CD8-positive, alpha-beta memory T cell (primary cell): ENCODE measurements at regions of chr2 and their contacts with region 1.

Region 1: GRCh38 chr2:210195101-210195852 is 24.1 kb upstream of the KANSL1L start:
- DNase-seq: peak in 2 of 5 donors; percentile 39 to 41
- H3K4me3 ChIP-seq: no peak overlapping the region
- H3K4me3 Mint-ChIP-seq: no peak overlapping the region
- H3K27ac ChIP-seq: no peak overlapping the region
- H3K27ac Mint-ChIP-seq: no peak overlapping the region
- H3K4me1 ChIP-seq: no peaks in the 10 kb centered on the region
- H3K4me1 Mint-ChIP-seq: no peaks in the 10 kb centered on the region
- H3K27me3 ChIP-seq: no peaks in the 10 kb centered on the region
- H3K27me3 Mint-ChIP-seq: peaks cover 5 to 10% of the 10 kb centered on the region in 2 donors

Region 2: GRCh38 chr2:209977386-209978239 is 217.7 kb before region 1 on chr2:
- CTCF ChIA-PET with region 1: interaction called, 20 read pairs
- POLR2A ChIA-PET with region 1: no interaction called
- DNase-seq: peak in 2 of 5 donors; percentile 31 to 50
- H3K4me3 ChIP-seq: no peak overlapping the region
- H3K4me3 Mint-ChIP-seq: no peak overlapping the region
- H3K27ac ChIP-seq: no peak overlapping the region
- H3K27ac Mint-ChIP-seq: no peak overlapping the region
- H3K4me1 ChIP-seq: no peaks in the 10 kb centered on the region
- H3K4me1 Mint-ChIP-seq: no peaks in the 10 kb centered on the region
- H3K27me3 ChIP-seq: no peaks in the 10 kb centered on the region
- H3K27me3 Mint-ChIP-seq: peaks cover 1 to 13% of the 10 kb centered on the region in 2 donors

Region 3: GRCh38 chr2:210112871-210113270 is 82.4 kb before region 1 on chr2:
- CTCF ChIA-PET with region 1: no interaction called
- POLR2A ChIA-PET with region 1: no interaction called
- DNase-seq: no peak
- H3K4me3 ChIP-seq: no peak overlapping the region
- H3K4me3 Mint-ChIP-seq: no peak overlapping the region
- H3K27ac ChIP-seq: no peak overlapping the region
- H3K27ac Mint-ChIP-seq: no peak overlapping the region
- H3K4me1 ChIP-seq: no peaks in the 10 kb centered on the region
- H3K4me1 Mint-ChIP-seq: peaks cover 0 to 2% (median 0%) of the 10 kb centered on the region in 3 donors
- H3K27me3 ChIP-seq: no peaks in the 10 kb centered on the region
- H3K27me3 Mint-ChIP-seq: no peaks in the 10 kb centered on the region

Region 4: GRCh38 chr2:210288408-210288807 is 93.1 kb after region 1 on chr2:
- CTCF ChIA-PET with region 1: no interaction called
- POLR2A ChIA-PET with region 1: no interaction called
- DNase-seq: no peak
- H3K4me3 ChIP-seq: no peak overlapping the region
- H3K4me3 Mint-ChIP-seq: no peak overlapping the region
- H3K27ac ChIP-seq: no peak overlapping the region
- H3K27ac Mint-ChIP-seq: no peak overlapping the region
- H3K4me1 ChIP-seq: no peaks in the 10 kb centered on the region
- H3K4me1 Mint-ChIP-seq: no peaks in the 10 kb centered on the region
- H3K27me3 ChIP-seq: no peaks in the 10 kb centered on the region
- H3K27me3 Mint-ChIP-seq: peaks cover 0 to 7% of the 10 kb centered on the region in 2 donors